Mammary epithelial cell (primary cell): ENCODE measurements at regions of chr1 and their contacts with region 1.

Region 1: DNA sequence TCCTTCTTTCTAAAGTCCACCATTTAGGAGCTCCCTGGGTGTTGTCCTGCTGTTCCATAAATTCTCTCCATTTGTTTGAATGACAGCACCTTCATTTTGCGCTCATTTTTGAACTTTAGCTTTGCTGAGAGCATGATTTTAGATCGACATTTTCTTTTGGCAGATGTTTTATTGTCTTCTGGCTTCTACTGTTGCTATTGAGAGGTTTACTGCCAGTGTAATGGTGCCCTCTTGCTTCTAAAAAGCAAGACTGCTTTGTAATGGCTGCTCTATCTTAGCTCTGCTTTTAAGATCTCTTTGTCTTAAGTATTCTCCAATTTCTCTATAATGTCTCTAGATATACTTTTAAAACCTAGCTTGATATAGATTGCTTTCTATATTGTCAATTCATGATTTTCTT is 27.9 kb downstream of the THEM4 start:
- DNase-seq: no peak
- H3K4me3 ChIP-seq: no peak overlapping the region
- H3K27ac ChIP-seq: no peak overlapping the region
- H3K4me1 ChIP-seq: peaks cover 12% of the 10 kb centered on the region
- H3K27me3 ChIP-seq: no peaks in the 10 kb centered on the region
- CTCF ChIP-seq: peak; percentile 18 to 55

Region 2: DNA sequence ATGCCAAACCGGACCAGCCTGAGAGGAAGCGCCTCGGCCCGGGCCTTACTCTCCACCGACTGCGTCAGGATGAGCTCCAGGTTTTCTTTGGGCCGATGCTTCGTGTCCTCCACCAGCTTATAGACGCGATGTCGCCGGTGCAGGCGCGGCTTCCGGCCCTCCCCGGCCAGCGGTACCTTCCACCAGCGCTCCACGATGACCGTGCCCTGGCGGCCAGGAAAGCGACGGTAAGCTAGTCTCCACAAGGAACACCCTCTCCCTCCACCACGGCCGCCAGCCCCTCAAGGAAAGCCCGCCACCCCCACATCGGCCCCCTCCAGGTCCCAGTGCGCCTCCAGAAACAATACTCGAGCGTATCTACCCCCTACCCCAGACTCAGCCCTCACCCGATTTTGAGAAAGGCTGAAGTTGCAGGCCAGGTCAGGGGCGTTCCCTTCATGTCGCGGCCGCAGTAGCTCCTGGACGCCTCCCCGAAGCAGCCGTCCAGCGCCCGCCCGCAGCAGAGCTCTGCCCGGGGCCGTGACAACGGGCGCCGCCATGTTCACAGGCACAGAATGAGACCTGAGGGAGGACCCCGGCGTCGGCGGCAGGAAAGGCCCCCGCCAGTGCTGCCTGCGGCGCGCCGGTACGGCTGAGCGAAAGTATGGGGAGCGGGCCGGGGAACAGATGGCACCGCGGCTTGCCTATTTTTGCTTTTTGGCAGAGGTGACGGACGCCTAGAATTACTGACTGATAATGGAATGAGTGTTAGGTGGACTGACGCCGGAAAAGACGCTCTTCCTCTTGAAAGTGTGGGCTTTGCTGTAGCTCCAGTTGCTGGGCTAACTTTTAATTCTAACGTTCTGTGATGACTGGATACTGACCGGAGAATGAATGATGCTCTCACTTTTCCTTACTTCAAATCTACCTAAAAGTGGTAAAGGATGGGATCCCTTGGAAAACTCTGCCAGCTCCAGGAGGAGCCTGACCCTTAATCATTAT is 118.2 kb before region 1 on chr1 and contains the start of gene MRPL9:
- CTCF ChIA-PET with region 1: no interaction called
- dilution Hi-C with region 1: no loop called
- in situ Hi-C with region 1: no loop called
- intact Hi-C with region 1: loop called (anchors 5 kb)
- DNase-seq: peak; percentile 80
- H3K4me3 ChIP-seq: peak within 1 kb of the TSS; percentile 86 to 93 (median 89)
- H3K27ac ChIP-seq: peak within 1 kb of the TSS; percentile 85
- H3K4me1 ChIP-seq: peaks cover 19% of the 10 kb centered on the region
- H3K27me3 ChIP-seq: no peaks in the 10 kb centered on the region
- CTCF ChIP-seq: no peak
- total RNA-seq, gene MRPL9: 47.5 to 77.4 TPM